ENCODE measurements at regions of chr19 and their contacts with region 1.

Region 1: GRCh38 chr19:1789261-1790041 is 22.6 kb downstream of the ATP8B3 start:
- DNase-seq: no peak
- H3K4me3 ChIP-seq: peak overlapping the region; percentile 7 to 58 (median 32); a peak in 5 of 8 replicates
- H3K27ac ChIP-seq: no peak overlapping the region
- H3K4me1 ChIP-seq: peaks cover 0 to 8% (median 4%) of the 10 kb centered on the region in 4 experiments; a peak in 5 of 7 replicates
- H3K27me3 ChIP-seq: peaks cover 2 to 17% (median 13%) of the 10 kb centered on the region in 4 experiments; a peak in 6 of 7 replicates
- CTCF ChIP-seq: no peak
- EP300 ChIP-seq: no peak
- POLR2A ChIP-seq: no peak
- RAD21 ChIP-seq: no peak

Region 2: GRCh38 chr19:1774999-1775772 is 14.3 kb before region 1 on chr19:
- CTCF ChIA-PET with region 1: interaction called, 150 read pairs
- POLR2A ChIA-PET with region 1: interaction called, 5 read pairs
- DNase-seq: peak; percentile 72 to 92
- H3K4me3 ChIP-seq: peak overlapping the region; percentile 7 to 56 (median 8); a peak in 4 of 8 replicates
- H3K27ac ChIP-seq: no peak overlapping the region
- H3K4me1 ChIP-seq: peaks cover 0 to 4% (median 1%) of the 10 kb centered on the region in 4 experiments; a peak in 3 of 7 replicates
- H3K27me3 ChIP-seq: peaks cover 24 to 72% (median 65%) of the 10 kb centered on the region in 4 experiments
- CTCF ChIP-seq: peak; percentile 85 to 95 (median 88)
- EP300 ChIP-seq: no peak
- POLR2A ChIP-seq: no peak
- RAD21 ChIP-seq: peak; percentile 55 to 71

Region 3: DNA sequence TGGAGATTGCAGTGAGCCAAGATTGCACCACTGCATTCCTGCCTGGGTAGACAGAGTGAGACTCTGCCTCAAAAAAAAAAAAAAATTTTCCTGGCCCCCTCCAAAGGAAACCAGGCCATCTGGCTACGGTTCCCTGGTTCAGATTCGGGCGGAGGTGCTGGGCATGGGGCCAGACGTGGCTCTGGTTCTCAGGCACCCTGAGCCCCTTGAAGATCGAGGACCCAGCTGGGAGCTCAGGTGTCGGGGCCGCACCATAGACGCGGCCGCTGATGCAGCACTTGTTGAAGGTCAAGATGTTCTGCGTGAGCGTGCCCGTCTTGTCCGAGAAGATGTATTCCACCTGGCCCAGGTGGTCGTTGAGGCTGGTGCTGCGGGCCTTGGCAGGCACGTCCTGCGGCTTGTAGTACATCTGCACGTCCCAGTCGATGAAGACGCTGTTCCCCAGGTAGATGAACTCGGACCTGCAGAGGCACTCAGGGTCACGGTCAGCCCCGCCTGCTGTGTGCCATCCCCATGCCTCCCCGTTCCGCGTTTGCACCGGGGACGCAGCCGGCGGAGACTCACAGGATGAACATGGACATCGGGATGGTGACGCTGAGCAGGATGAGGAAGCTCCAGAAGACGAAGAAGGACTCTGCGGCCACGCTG is 10.4 kb after region 1 on chr19:
- CTCF ChIA-PET with region 1: interaction called, 150 read pairs
- POLR2A ChIA-PET with region 1: interaction called, 3 read pairs
- DNase-seq: no peak
- H3K4me3 ChIP-seq: no peak overlapping the region
- H3K27ac ChIP-seq: no peak overlapping the region
- H3K4me1 ChIP-seq: peaks cover 0 to 7% (median under 1%) of the 10 kb centered on the region in 4 experiments; a peak in 5 of 7 replicates
- H3K27me3 ChIP-seq: peaks cover 0 to 3% (median under 1%) of the 10 kb centered on the region in 4 experiments; a peak in 2 of 7 replicates
- CTCF ChIP-seq: no peak
- EP300 ChIP-seq: no peak
- POLR2A ChIP-seq: no peak
- RAD21 ChIP-seq: no peak

Region 4: DNA sequence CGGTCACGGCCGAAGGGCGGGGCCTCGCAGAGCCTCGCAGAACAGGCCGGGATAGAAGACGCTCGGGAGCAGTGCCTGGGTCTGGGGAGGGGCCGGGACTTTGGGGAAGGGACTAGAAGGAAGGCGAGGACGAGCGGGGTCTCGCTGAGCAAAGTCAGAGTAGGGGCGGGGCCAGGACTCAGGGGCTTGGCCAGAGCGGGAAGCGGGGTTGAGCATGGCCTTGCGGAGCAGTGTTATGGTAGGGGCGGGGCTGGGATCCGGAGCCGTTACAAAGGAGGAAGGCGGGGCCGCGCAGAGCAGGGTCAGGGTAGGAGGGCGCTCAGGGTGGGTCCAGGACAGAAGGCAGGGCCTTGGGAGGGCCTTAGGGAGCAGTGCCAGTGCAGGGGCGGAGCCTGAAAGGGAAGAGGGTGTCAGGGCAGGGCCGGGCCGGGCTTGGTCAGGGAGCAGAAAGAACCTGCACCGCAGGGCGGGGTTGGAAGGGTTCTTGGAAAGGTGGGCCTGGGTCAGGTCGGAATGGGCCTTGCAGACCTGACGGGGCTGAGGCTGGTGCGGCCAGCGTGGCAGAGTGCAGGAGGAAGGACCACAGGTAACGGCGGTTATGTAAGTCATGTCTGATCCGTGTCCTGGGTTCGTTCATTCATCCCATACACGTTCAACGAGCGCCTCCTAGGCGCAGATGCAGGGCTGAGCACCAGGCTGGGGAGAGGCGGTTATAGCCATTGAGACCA is 23.2 kb after region 1 on chr19:
- CTCF ChIA-PET with region 1: interaction called, 73 read pairs
- POLR2A ChIA-PET with region 1: interaction called, 4 read pairs
- DNase-seq: peak; percentile 93 to 95
- H3K4me3 ChIP-seq: peak overlapping the region; percentile 49 to 69 (median 56)
- H3K27ac ChIP-seq: no peak overlapping the region; the same call in 1 of the 2 replicates
- H3K4me1 ChIP-seq: peaks cover 0 to 2% (median 0%) of the 10 kb centered on the region in 4 experiments; a peak in 3 of 7 replicates
- H3K27me3 ChIP-seq: peaks cover 0 to 3% (median 0%) of the 10 kb centered on the region in 4 experiments; a peak in 3 of 7 replicates
- CTCF ChIP-seq: peak; percentile 80 to 93 (median 84)
- EP300 ChIP-seq: no peak
- POLR2A ChIP-seq: peak in 1 of 2 experiments; percentile 9; a peak in 1 of 3 replicates
- RAD21 ChIP-seq: peak; percentile 86 to 88

Measured in H1 (cell line).